A549 (cell line): ENCODE measurements at regions of chr5 and their contacts with region 1.

Region 1: DNA sequence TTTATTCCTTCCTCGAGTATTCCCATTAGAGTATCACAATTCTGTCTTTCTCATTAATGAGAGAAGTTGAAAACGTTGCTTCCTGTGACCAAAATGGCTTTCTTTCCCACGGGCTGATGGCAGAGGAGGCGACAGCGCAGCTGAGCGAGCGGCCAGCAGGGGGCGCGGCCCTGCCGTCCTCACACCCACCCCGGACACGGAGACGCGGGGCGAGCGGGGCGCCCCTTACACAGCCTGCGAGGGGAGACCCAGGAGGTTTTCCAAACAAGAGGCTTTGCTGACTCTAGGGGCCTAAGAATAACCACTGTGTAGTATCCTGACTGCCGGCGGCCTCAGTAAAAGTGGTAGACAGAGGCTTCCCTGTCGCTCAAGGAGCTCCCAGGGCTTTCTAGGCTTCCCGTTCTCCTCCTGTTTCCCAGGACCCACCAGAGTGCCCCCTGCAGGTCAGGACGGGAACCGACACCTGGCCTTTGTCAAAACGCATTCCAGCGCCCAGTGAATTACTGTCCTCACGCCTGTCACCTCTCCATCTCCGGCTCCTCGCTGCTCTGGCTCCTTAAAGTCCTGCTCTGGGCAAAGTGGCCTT is 27.3 kb upstream of the FGF1 start:
- DNase-seq: peak; percentile 70 to 89
- ATAC-seq: peak; percentile 89 to 93
- H3K4me3 ChIP-seq: peak overlapping the region; percentile 49
- H3K27ac ChIP-seq: peak overlapping the region; percentile 82 to 92
- H3K4me1 ChIP-seq: peaks cover 5% of the 10 kb centered on the region; the same call in 2 of the 3 replicates
- CTCF ChIP-seq: peak; percentile 100
- EP300 ChIP-seq: no peak
- POLR2A ChIP-seq: no peak
- RAD21 ChIP-seq: peak; percentile 43 to 78

Region 2: DNA sequence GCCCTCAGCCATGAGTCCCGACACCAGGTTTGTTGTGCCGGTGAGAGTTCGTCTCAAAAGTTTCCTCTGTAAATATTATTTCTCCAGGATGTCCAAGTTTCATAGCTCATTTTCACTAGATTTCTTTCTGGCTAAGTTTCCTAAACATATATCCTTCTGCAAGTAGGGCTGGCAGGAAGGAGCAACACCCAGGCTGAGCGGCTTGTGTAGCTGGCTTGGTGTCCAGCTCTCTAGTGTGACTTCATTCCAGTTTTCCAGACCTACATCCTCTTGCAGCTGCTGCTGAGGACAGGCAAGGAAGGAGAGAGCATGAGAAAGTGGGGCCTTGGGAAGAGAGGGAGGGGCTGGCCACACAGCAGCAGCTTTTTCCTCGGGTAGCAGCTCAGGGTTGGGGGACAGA is 107.6 kb before region 1 on chr5:
- CTCF ChIA-PET with region 1: interaction called, 212 read pairs
- POLR2A ChIA-PET with region 1: no interaction called
- DNase-seq: no peak
- ATAC-seq: no peak
- H3K4me3 ChIP-seq: no peak overlapping the region
- H3K27ac ChIP-seq: no peak overlapping the region
- H3K4me1 ChIP-seq: peaks cover 28% of the 10 kb centered on the region
- CTCF ChIP-seq: no peak
- EP300 ChIP-seq: no peak
- POLR2A ChIP-seq: no peak
- RAD21 ChIP-seq: no peak

Region 3: GRCh38 chr5:142644640-142645361 is 68.4 kb before region 1 on chr5:
- CTCF ChIA-PET with region 1: interaction called, 27 read pairs
- POLR2A ChIA-PET with region 1: interaction called, 3 read pairs
- DNase-seq: peak; percentile 83 to 85
- ATAC-seq: peak; percentile 94 to 97
- H3K4me3 ChIP-seq: no peak overlapping the region
- H3K27ac ChIP-seq: peak overlapping the region; percentile 3 to 77; a peak in 4 of 6 replicates
- H3K4me1 ChIP-seq: peaks cover 18% of the 10 kb centered on the region
- CTCF ChIP-seq: no peak
- EP300 ChIP-seq: no peak
- POLR2A ChIP-seq: no peak
- RAD21 ChIP-seq: no peak

Region 4: DNA sequence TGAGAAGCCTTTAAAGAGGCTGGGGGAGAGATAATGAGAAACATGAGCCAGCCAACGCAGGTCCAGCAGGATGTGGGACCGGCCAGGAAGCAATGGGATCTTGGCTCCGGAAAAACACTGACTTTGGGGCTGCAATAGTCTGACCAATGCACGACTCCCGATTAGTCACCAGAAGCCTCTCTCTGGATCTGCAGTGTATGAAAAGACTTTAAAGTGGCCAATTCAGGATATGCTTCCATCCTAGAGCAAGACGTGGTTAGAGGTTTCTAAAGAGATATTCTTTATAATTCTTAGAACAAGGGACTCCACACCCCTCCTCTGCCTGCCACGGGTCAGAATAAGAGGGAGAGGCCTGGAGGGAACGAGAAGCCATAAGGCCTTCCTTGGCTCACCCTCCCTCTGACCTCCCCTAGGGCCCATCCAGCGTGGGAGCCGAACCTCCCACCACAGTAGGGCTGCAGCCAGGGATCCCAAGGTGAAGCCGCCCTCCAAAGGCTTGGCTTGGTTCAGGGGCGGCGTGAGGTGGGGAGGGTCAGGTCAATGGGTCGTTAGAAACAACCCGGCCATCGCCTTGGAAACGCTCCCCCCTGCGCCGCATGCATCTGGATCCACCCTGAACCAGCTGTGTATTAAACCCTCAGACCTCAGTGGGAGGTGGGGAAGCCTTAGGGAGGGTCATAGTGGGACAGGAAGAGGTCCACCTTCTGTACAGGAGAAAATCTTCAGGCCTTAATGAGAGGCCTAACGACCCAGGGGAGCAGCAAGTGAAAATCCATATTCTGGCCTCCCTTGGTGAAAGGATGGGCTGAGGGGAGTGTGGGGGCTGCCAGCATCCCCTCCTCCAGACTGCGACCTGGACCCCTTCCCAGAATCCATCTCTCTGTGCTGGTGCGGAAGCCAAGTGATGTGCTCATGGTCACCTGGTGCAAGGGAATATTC is 38.4 kb before region 1 on chr5:
- CTCF ChIA-PET with region 1: interaction called, 13 read pairs
- POLR2A ChIA-PET with region 1: no interaction called
- DNase-seq: no peak
- ATAC-seq: no peak
- H3K4me3 ChIP-seq: no peak overlapping the region
- H3K27ac ChIP-seq: no peak overlapping the region
- H3K4me1 ChIP-seq: peaks cover 10% of the 10 kb centered on the region; the same call in 2 of the 3 replicates
- CTCF ChIP-seq: no peak
- EP300 ChIP-seq: no peak
- POLR2A ChIP-seq: no peak
- RAD21 ChIP-seq: no peak

Region 5: DNA sequence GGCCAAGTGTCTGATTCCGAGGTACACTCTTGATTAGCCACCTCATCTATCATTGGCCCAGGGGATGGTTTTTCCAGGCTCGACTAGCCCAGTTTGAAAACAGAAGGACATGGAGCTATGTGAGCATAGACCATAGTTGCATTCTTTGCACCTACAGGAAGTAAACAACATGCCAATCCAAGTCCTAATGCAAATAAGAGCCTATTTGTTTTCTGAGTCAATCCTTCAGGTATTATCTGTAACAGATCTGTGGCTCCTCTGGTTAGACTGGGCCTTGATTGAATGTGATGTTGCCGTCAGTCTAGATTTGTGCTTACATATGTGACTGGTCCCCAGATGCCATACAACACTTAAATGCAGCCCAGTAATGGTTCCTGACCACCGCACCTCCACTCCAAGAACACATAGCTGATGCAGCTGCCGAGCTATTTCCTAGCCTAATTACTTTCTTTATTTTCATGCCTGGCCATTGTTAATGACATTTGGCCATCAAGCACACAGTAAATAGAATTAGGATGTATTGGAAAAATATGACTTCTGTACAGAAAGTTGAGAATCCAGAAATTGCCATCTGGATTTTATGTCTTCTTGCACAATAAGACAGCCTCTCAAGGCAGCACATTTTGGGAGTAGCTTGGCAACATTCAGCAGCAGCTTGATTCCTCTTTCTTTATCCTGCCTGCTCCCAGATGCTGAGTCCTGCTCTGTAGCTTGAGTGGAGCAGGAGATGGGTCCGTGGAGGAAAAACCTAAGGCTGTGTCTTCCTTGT is 27.4 kb after region 1 on chr5:
- CTCF ChIA-PET with region 1: interaction called, 163 read pairs
- POLR2A ChIA-PET with region 1: no interaction called
- DNase-seq: peak in 1 of 2 experiments; percentile 41
- ATAC-seq: peak; percentile 40 to 83; a peak in 3 of 6 replicates
- H3K4me3 ChIP-seq: no peak overlapping the region
- H3K27ac ChIP-seq: no peak overlapping the region
- H3K4me1 ChIP-seq: peaks cover 10% of the 10 kb centered on the region
- CTCF ChIP-seq: no peak
- EP300 ChIP-seq: no peak
- POLR2A ChIP-seq: no peak
- RAD21 ChIP-seq: no peak

Region 6: DNA sequence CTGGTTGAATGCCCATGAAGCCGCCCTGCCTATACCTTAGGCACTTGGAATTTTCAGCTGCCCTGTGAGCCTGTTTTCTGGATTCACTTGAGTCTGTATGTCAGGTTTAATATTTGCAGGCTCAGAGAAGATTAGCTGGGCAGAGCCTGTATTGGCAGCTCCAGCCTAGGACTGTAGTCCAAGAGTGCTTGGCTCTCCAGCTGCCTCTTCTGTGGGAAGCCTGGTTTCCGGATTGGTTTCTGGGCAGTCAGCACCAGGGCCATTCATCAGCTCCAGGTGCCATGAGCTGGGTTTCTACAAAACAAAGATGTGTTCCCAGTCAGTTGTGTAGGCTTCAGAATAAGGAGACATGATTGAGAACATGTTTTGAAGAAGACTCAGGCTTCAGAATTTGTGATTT is 147.1 kb after region 1 on chr5:
- CTCF ChIA-PET with region 1: interaction called, 73 read pairs
- POLR2A ChIA-PET with region 1: no interaction called
- DNase-seq: no peak
- ATAC-seq: no peak
- H3K4me3 ChIP-seq: no peak overlapping the region
- H3K27ac ChIP-seq: no peak overlapping the region
- H3K4me1 ChIP-seq: peaks cover 28% of the 10 kb centered on the region
- CTCF ChIP-seq: no peak
- EP300 ChIP-seq: no peak
- POLR2A ChIP-seq: no peak
- RAD21 ChIP-seq: no peak

Region 7: GRCh38 chr5:142922223-142922952 is 209.2 kb after region 1 on chr5:
- CTCF ChIA-PET with region 1: interaction called, 17 read pairs
- POLR2A ChIA-PET with region 1: no interaction called
- DNase-seq: peak; percentile 38 to 76
- ATAC-seq: peak; percentile 72 to 77
- H3K4me3 ChIP-seq: no peak overlapping the region
- H3K27ac ChIP-seq: peak overlapping the region; percentile 51 to 70
- H3K4me1 ChIP-seq: peaks cover 58% of the 10 kb centered on the region
- CTCF ChIP-seq: peak; percentile 75
- EP300 ChIP-seq: peak; percentile 49 to 67; a peak in 1 of 5 replicates
- POLR2A ChIP-seq: no peak
- RAD21 ChIP-seq: peak; percentile 80 to 88

Region 8: DNA sequence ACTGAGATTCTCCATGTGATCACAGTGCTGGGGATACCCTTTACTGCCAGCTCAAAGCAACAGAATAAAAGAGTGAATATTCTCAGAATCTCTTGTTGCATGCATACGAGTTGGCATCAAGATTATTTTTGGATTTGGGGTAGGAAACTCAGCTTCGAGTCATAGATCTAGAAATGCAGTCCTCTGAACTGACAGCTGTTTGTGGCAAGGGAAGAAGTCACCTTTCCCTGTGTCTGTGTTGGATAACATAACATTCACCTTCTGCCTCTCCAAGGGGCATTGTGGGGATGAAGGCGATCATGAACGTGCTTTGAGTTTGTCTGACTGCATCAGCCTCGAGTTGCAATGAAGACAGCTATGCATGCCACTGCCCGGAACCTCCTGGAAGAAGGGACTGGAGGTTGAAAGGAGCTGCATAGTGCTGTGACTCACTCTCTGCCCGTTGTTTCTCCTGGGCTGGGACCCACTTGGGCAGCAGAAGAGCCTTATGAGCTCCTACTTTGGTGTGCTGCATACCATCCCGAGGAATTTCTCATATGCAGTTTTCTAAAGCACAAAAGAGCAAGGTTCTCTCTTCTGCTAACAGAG is 288.6 kb after region 1 on chr5:
- CTCF ChIA-PET with region 1: no interaction called
- POLR2A ChIA-PET with region 1: no interaction called
- DNase-seq: no peak
- ATAC-seq: peak; percentile 51 to 73; a peak in 3 of 6 replicates
- H3K4me3 ChIP-seq: no peak overlapping the region
- H3K27ac ChIP-seq: peak overlapping the region; percentile 52 to 62
- H3K4me1 ChIP-seq: peaks cover 22% of the 10 kb centered on the region
- CTCF ChIP-seq: no peak
- EP300 ChIP-seq: no peak
- POLR2A ChIP-seq: no peak
- RAD21 ChIP-seq: no peak